Caco-2 (cell line): ENCODE measurements at regions of chr2 and their contacts with region 1.

Region 1: DNA sequence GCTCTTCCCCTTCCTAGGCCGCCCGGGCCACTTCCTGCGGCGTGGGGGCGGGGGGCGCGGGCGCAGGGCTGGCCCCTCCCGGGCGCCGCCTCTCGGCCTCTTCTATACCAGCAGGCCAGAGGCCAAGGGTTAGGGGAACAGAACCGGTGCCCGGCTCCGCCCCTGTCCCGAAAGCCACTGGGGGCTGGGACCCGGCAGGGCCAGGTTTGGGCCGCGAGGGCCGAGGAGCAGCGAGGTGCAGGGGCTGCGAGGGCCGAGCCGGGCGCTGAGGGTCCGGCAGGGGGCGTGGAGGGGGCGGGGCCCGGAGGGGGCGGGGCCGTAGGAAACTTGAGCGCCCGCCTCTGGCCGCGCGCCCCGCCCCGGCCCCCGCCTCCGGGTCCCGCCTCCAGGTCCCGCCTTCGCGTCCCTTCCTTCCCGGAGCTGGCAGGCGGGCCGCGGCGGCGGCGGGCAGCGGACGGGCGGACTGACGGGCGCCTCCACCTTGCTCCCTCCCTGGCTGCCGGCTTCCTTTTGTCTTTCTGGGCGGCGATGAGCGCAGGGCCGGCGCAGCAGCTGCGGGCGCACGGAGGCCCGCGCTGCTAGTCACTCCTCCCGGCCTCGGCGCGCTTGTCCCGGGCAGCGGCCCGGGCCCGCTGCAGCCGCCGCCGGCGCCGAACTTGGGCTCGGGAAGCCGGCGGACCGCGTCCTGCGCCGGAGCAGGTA is at the start of gene HPCAL1:
- DNase-seq: peak; percentile 96 to 98
- H3K4me3 ChIP-seq: peak within 1 kb of the TSS; percentile 99
- H3K4me3 Mint-ChIP-seq: peak within 1 kb of the TSS; percentile 94
- H3K27ac Mint-ChIP-seq: peak within 1 kb of the TSS; percentile 60
- H3K4me1 ChIP-seq: peaks cover 23% of the 10 kb centered on the region
- H3K4me1 Mint-ChIP-seq: peaks cover 20% of the 10 kb centered on the region
- H3K27me3 ChIP-seq: no peaks in the 10 kb centered on the region
- H3K27me3 Mint-ChIP-seq: no peaks in the 10 kb centered on the region
- CTCF ChIP-seq: peak; percentile 66 to 83
- total RNA-seq, gene HPCAL1: 26.3 and 26.9 TPM in 2 replicates

Region 2: DNA sequence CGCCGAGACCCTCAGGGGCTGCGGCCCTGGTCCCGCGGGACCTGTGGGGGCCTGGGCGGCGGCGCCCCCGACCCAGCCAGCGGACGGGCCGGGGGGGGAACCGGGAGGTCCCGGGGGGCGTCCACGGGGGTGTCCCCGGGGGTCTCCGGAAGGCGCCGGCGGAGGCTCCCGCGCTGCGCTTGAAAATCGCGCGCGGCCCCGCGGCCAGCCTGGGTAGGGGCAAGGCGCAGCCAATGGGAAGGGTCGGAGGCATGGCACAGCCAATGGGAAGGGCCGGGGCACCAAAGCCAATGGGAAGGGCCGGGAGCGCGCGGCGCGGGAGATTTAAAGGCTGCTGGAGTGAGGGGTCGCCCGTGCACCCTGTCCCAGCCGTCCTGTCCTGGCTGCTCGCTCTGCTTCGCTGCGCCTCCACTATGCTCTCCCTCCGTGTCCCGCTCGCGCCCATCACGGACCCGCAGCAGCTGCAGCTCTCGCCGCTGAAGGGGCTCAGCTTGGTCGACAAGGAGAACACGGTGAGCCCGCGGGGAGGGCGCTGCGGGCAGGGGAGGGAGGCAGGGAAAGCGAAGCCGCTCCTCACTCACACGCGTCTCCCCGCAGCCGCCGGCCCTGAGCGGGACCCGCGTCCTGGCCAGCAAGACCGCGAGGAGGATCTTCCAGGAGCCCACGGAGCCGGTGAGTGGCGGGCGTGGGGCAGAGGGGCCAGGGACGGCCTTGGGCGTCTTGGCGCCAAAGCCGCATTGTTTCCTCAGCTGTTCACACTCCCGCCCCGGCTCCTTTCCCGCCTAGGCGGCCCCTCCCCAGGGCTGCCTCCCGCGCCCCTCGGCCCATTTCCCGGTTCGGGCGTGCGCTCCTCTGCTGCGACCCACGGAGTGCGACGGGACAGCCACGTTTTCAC is 180.0 kb before region 1 on chr2 and contains the start of gene RRM2:
- CTCF ChIA-PET with region 1: interaction called, 6 read pairs
- POLR2A ChIA-PET with region 1: no interaction called
- intact Hi-C with region 1: loop called (anchors 1 kb)
- DNase-seq: peak; percentile 98
- H3K4me3 ChIP-seq: peak within 1 kb of the TSS; percentile 66
- H3K4me3 Mint-ChIP-seq: peak within 1 kb of the TSS; percentile 96
- H3K27ac Mint-ChIP-seq: peak within 1 kb of the TSS; percentile 96
- H3K4me1 ChIP-seq: peaks cover 11% of the 10 kb centered on the region
- H3K4me1 Mint-ChIP-seq: peaks cover 13% of the 10 kb centered on the region
- H3K27me3 ChIP-seq: no peaks in the 10 kb centered on the region
- H3K27me3 Mint-ChIP-seq: no peaks in the 10 kb centered on the region
- CTCF ChIP-seq: no peak
- total RNA-seq, gene RRM2: 160 and 169 TPM in 2 replicates

Region 3: GRCh38 chr2:10162586-10163497 is 139.8 kb before region 1 on chr2:
- CTCF ChIA-PET with region 1: interaction called, 14 read pairs
- POLR2A ChIA-PET with region 1: interaction called, 3 read pairs
- intact Hi-C with region 1: no loop called
- DNase-seq: peak in 1 of 2 experiments; percentile 72
- H3K4me3 ChIP-seq: no peak overlapping the region
- H3K4me3 Mint-ChIP-seq: no peak overlapping the region
- H3K27ac Mint-ChIP-seq: no peak overlapping the region
- H3K4me1 ChIP-seq: peaks cover 8% of the 10 kb centered on the region
- H3K4me1 Mint-ChIP-seq: peaks cover 7% of the 10 kb centered on the region
- H3K27me3 ChIP-seq: no peaks in the 10 kb centered on the region
- H3K27me3 Mint-ChIP-seq: no peaks in the 10 kb centered on the region
- CTCF ChIP-seq: peak; percentile 42 to 47

Region 4: DNA sequence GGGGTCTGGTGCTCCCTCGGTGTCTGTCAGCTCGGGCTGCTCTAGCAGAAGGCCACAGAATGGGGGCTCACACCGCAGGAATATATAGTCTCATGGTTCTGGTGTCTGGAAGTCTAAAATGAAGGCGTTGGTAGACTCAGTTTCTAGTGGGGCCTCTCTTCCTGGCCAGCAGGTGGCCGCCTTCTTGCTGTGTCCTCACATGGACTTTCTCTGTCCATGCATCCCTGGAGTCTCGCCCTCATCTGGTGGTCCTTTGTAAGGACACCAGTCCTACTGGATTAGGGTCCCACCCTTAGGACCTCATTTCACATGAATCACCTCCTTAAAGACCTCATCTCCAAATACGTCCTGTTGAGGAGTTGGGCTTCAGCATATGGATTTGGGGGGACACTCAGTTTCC is 114.4 kb before region 1 on chr2:
- CTCF ChIA-PET with region 1: no interaction called
- POLR2A ChIA-PET with region 1: no interaction called
- intact Hi-C with region 1: loop called (anchors 10 kb)
- DNase-seq: peak in 1 of 2 experiments; percentile 61
- H3K4me3 ChIP-seq: no peak overlapping the region
- H3K4me3 Mint-ChIP-seq: no peak overlapping the region
- H3K27ac Mint-ChIP-seq: no peak overlapping the region
- H3K4me1 ChIP-seq: no peaks in the 10 kb centered on the region
- H3K4me1 Mint-ChIP-seq: no peaks in the 10 kb centered on the region
- H3K27me3 ChIP-seq: no peaks in the 10 kb centered on the region
- H3K27me3 Mint-ChIP-seq: no peaks in the 10 kb centered on the region
- CTCF ChIP-seq: peak; percentile 54 to 88

Region 5: DNA sequence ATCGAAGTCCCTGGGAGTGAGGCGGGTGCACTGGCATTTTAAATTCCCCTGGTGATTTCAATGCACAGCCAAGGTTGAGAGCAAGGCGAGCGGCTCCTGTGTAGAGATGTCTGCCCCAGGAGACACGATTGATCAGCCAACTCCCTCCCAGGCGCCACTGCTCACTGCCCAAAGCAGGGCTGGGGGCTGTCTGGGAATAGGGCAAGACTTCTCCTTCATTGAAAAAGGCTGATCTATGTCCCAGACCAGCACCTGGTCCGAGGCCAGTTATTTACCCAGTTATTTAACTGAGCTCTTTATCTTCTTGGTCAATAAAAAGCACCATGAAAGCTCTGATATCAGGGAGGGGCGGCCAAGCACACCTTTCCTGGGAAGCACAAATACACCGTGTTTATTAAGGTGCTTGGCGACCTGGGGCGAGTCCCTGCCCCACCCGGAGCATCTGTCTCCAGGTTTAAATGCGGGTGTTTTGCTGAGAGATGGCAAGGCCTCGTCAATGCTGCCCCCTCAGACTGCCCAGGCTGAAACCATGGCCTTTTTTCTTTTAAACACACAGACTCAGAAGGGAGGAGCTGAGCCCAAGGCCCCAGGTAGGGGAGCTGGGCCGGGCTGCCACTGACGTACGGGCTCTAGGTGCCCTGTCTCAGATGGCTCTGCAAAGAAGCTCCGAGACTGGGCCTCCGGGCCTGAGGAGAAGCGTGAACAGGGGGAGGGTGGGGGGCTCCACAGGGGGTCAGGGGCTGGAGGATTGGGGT is 73.8 kb before region 1 on chr2:
- CTCF ChIA-PET with region 1: interaction called, 6 read pairs
- POLR2A ChIA-PET with region 1: interaction called, 5 read pairs
- intact Hi-C with region 1: loop called (anchors 1 kb)
- DNase-seq: peak; percentile 79 to 86
- H3K4me3 ChIP-seq: no peak overlapping the region
- H3K4me3 Mint-ChIP-seq: no peak overlapping the region
- H3K27ac Mint-ChIP-seq: peak overlapping the region; percentile 64
- H3K4me1 ChIP-seq: peaks cover 57% of the 10 kb centered on the region
- H3K4me1 Mint-ChIP-seq: peaks cover 54% of the 10 kb centered on the region
- H3K27me3 ChIP-seq: no peaks in the 10 kb centered on the region
- H3K27me3 Mint-ChIP-seq: no peaks in the 10 kb centered on the region
- CTCF ChIP-seq: peak in 1 of 2 experiments; percentile 10

Region 6: DNA sequence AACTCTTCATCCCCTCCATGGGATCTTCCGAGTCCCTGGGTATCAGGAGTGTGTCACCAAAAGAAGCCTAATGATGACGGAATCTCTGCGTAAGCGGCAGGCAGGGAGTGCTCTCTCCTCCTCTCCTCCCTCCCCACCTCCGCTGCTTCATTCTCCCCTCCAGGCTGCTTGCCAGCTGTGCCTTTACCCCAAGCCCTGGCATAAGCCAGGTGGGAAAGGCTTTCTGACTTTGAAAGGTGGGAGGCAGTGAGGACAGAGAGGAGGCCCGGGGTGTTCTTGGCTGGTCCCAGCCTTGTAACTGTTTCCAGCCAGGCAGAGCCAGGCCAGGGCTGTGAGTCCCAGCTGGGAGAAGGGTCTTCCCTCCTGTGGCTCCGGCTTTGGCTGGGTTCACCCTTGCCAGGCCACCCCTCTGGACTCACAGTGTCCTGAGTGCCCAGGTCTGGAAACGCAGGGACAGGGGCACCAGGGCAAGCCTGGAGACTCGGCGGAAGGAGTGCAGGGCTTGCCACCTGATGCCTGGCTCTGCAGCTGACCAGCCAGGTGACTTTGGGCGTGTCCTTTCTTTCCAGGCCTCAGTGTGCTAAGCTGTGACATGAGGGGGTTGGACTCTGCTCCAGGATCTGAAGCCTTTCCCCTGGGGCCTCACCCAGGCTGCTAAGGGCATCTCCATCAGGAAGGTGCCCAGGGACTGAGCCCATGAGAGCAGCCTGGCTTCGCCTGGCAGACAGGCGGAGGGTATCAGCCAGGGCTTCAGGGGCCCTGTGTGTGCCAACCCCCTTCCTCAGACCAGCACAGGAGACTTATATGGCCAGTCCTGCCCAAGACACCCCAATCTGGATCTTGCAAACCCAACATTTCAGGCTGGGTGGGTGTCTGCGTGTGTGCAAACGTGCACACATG is 32.7 kb before region 1 on chr2:
- CTCF ChIA-PET with region 1: interaction called, 7 read pairs
- POLR2A ChIA-PET with region 1: no interaction called
- intact Hi-C with region 1: loop called (anchors 1 kb)
- DNase-seq: peak in 1 of 2 experiments; percentile 21
- H3K4me3 ChIP-seq: no peak overlapping the region
- H3K4me3 Mint-ChIP-seq: no peak overlapping the region
- H3K27ac Mint-ChIP-seq: peak overlapping the region; percentile 55
- H3K4me1 ChIP-seq: peaks cover 14% of the 10 kb centered on the region
- H3K4me1 Mint-ChIP-seq: peaks cover 12% of the 10 kb centered on the region
- H3K27me3 ChIP-seq: no peaks in the 10 kb centered on the region
- H3K27me3 Mint-ChIP-seq: no peaks in the 10 kb centered on the region
- CTCF ChIP-seq: no peak

Region 7: GRCh38 chr2:10322973-10323934 is 20.6 kb after region 1 on chr2:
- CTCF ChIA-PET with region 1: interaction called, 7 read pairs
- POLR2A ChIA-PET with region 1: interaction called, 3 read pairs
- intact Hi-C with region 1: loop called (anchors 1 kb)
- DNase-seq: no peak
- H3K4me3 ChIP-seq: no peak overlapping the region
- H3K4me3 Mint-ChIP-seq: peak overlapping the region; percentile 9
- H3K27ac Mint-ChIP-seq: peak overlapping the region; percentile 87
- H3K4me1 ChIP-seq: peaks cover 47% of the 10 kb centered on the region
- H3K4me1 Mint-ChIP-seq: peaks cover 26% of the 10 kb centered on the region
- H3K27me3 ChIP-seq: no peaks in the 10 kb centered on the region
- H3K27me3 Mint-ChIP-seq: no peaks in the 10 kb centered on the region
- CTCF ChIP-seq: no peak